Posterior cingulate gyrus (tissue), 11 donors: ENCODE measurements at regions of chr18 and their contacts with region 1.

Region 1: GRCh38 chr18:63444567-63444966 is 22.3 kb upstream of the VPS4B start:
- DNase-seq: no peak

Region 2: DNA sequence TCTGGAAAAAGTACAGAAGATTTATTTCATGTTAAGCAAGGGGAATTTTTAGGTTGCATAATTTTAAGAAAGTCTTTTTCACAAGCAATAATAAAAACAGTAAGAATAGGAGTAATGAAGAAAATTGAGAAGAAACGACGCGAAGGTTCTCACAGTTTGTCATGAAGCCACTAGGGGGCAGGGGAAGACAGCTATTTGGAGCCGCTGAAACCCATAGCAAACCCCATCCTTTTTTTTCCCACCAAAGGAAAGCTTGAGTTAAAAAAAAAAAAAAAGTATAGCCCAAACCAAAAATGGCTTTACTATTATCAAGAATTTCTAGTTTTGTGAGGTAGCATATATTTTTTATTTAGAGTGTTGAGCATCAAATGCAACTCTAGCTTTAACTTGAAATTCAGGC is 428.3 kb before region 1 on chr18:
- intact Hi-C with region 1: loop called (anchors 5 kb)
- DNase-seq: peak in 6 of 10 donors; percentile 29 to 56 (median 42)

Region 3: DNA sequence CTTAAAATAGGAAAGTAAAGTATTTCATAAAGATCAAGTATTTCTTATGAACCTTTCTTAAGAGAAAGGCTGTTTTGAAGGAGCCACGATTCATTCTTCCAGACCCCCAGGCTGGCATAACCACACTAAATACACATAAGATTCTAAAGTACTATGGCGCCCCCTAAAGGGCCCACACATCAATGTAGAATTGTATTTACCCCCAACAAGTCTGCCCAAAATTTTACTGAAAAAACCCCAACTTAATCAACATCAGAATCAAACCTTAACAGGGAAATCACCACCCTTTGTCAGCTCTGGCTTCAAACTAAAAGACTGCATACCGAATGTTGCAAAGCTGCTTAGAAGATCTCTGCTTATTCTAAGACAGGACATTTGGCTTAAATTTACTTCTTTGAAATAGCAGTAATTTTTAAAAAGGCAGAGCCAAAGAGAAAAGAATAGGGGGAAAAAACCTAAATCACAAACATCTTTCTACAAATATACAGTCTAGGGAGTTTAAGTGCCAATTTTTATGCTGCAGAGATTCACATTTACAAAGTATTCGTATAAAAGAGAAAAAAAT is 104.6 kb before region 1 on chr18:
- intact Hi-C with region 1: loop called (anchors 5 kb)
- DNase-seq: peak in 2 of 10 donors; percentile 28 to 44

Region 4: GRCh38 chr18:63505566-63506335 is 61.2 kb after region 1 on chr18:
- intact Hi-C with region 1: no loop called
- DNase-seq: no peak